GM23248 (cell line): ENCODE measurements at regions of chr1 and their contacts with region 1.

Region 1: GRCh38 chr1:154878371-154879022 is 8.4 kb upstream of the KCNN3 start:
- DNase-seq: peak; percentile 84
- H3K4me3 ChIP-seq: no peak overlapping the region
- H3K27ac ChIP-seq: no peak overlapping the region
- H3K4me1 ChIP-seq: no peaks in the 10 kb centered on the region
- H3K27me3 ChIP-seq: peaks cover 11% of the 10 kb centered on the region

Region 2: GRCh38 chr1:154669464-154670282 is 208.8 kb before region 1 on chr1:
- in situ Hi-C with region 1: loop called (anchors 25 kb)
- DNase-seq: peak; percentile 83
- H3K4me3 ChIP-seq: no peak overlapping the region
- H3K27ac ChIP-seq: no peak overlapping the region
- H3K4me1 ChIP-seq: no peaks in the 10 kb centered on the region
- H3K27me3 ChIP-seq: no peaks in the 10 kb centered on the region; the same call in 1 of the 2 replicates

Region 3: GRCh38 chr1:155167166-155168104 is 288.9 kb after region 1 on chr1:
- in situ Hi-C with region 1: no loop called
- DNase-seq: peak; percentile 86
- H3K4me3 ChIP-seq: no peak overlapping the region
- H3K27ac ChIP-seq: no peak overlapping the region
- H3K4me1 ChIP-seq: peaks cover 11% of the 10 kb centered on the region
- H3K27me3 ChIP-seq: no peaks in the 10 kb centered on the region